ENCODE measurements at regions of chr1 and their contacts with region 1.

Region 1: GRCh38 chr1:247906504-247907047 is 11.2 kb downstream of the OR2W3 start:
- DNase-seq: peak in 5 of 9 donors; percentile 4 to 15 (median 7)
- ATAC-seq: peak; percentile 54
- H3K4me3 ChIP-seq: peak overlapping the region; percentile 36
- H3K4me3 Mint-ChIP-seq: peak overlapping the region; percentile 81 to 90 (median 85)
- H3K27ac ChIP-seq: peak overlapping the region; percentile 7
- H3K27ac Mint-ChIP-seq: peak overlapping the region; percentile 74 to 92 (median 80)
- H3K4me1 ChIP-seq: no peaks in the 10 kb centered on the region
- H3K4me1 Mint-ChIP-seq: peaks cover 15 to 28% (median 19%) of the 10 kb centered on the region in 7 donors
- H3K27me3 ChIP-seq: no peaks in the 10 kb centered on the region
- H3K27me3 Mint-ChIP-seq: no peaks in the 10 kb centered on the region

Region 2: GRCh38 chr1:247421074-247421473 is 485.5 kb before region 1 on chr1:
- CTCF ChIA-PET with region 1: no interaction called
- POLR2A ChIA-PET with region 1: no interaction called
- intact Hi-C with region 1: no loop called
- DNase-seq: no peak
- ATAC-seq: peak; percentile 60
- H3K4me3 ChIP-seq: no peak overlapping the region
- H3K4me3 Mint-ChIP-seq: peak overlapping the region in 8 of 10 donors; percentile 34 to 52 (median 42)
- H3K27ac ChIP-seq: no peak overlapping the region
- H3K27ac Mint-ChIP-seq: peak overlapping the region in 5 of 9 donors; percentile 11 to 63 (median 25)
- H3K4me1 ChIP-seq: peaks cover 9 to 22% of the 10 kb centered on the region in 2 donors
- H3K4me1 Mint-ChIP-seq: peaks cover 15 to 76% (median 51%) of the 10 kb centered on the region in 7 donors
- H3K27me3 ChIP-seq: no peaks in the 10 kb centered on the region
- H3K27me3 Mint-ChIP-seq: peaks cover 0 to 14% (median 0%) of the 10 kb centered on the region in 5 donors

Region 3: DNA sequence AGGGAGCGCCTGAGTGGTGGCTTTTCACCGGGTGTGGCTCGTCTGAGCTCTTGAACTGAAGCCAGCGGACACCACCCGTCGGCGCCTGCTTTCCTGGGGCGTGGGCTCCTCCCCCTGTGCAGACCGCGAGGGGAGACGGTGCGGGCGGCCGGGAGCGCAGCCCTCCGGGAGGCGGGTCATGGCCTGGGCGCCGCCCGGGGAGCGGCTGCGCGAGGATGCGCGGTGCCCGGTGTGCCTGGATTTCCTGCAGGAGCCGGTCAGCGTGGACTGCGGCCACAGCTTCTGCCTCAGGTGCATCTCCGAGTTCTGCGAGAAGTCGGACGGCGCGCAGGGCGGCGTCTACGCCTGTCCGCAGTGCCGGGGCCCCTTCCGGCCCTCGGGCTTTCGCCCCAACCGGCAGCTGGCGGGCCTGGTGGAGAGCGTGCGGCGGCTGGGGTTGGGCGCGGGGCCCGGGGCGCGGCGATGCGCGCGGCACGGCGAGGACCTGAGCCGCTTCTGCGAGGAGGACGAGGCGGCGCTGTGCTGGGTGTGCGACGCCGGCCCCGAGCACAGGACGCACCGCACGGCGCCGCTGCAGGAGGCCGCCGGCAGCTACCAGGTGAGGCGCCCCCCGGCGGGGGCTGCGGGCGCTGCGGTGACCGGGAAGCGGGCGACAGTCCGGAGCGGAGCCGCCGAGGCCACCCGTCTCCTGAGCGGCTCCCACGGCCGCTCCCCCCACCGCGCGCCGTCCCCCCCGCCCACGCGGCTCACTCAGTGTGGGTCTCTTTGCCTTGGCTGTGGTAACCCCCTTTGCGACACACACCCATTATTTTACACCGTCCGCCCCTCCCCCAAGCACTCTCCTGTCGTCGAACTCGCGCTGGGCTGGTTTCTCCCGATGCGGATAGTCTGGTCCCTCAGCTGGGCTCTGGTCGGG is 49.2 kb before region 1 on chr1 and contains the start of gene TRIM58:
- CTCF ChIA-PET with region 1: no interaction called
- POLR2A ChIA-PET with region 1: no interaction called
- intact Hi-C with region 1: loop called in 1 of 2 experiments (anchors 5 kb)
- DNase-seq: peak in 6 of 9 donors; percentile 4 to 53 (median 10)
- ATAC-seq: peak; percentile 71
- H3K4me3 ChIP-seq: peak within 1 kb of the TSS; percentile 13
- H3K4me3 Mint-ChIP-seq: peak within 1 kb of the TSS; percentile 71 to 87 (median 80)
- H3K27ac ChIP-seq: no peak within 1 kb of the TSS
- H3K27ac Mint-ChIP-seq: peak within 1 kb of the TSS in 4 of 9 donors; percentile 25 to 46 (median 36)
- H3K4me1 ChIP-seq: no peaks in the 10 kb centered on the region
- H3K4me1 Mint-ChIP-seq: peaks cover 6 to 17% (median 11%) of the 10 kb centered on the region in 7 donors
- H3K27me3 ChIP-seq: peaks cover 0 to 6% of the 10 kb centered on the region in 2 donors
- H3K27me3 Mint-ChIP-seq: peaks cover 43 to 70% (median 59%) of the 10 kb centered on the region in 5 donors
- total RNA-seq, gene TRIM58: 0.24 to 2.1 (median 0.65) TPM in 4 of 5 experiments, not detected in the other

Region 4: GRCh38 chr1:247924868-247925267 is 18.3 kb after region 1 on chr1 and contains the start of gene OR2AJ1:
- CTCF ChIA-PET with region 1: no interaction called
- POLR2A ChIA-PET with region 1: no interaction called
- intact Hi-C with region 1: no loop called
- DNase-seq: no peak
- ATAC-seq: no peak
- H3K4me3 ChIP-seq: no peak within 1 kb of the TSS
- H3K4me3 Mint-ChIP-seq: no peak within 1 kb of the TSS
- H3K27ac ChIP-seq: no peak within 1 kb of the TSS
- H3K27ac Mint-ChIP-seq: no peak within 1 kb of the TSS
- H3K4me1 ChIP-seq: no peaks in the 10 kb centered on the region
- H3K4me1 Mint-ChIP-seq: no peaks in the 10 kb centered on the region
- H3K27me3 ChIP-seq: no peaks in the 10 kb centered on the region
- H3K27me3 Mint-ChIP-seq: peaks cover 0 to 13% (median 3%) of the 10 kb centered on the region in 5 donors
- total RNA-seq, gene OR2AJ1: not detected

Region 5: GRCh38 chr1:247936415-247936814 is 29.8 kb after region 1 on chr1:
- CTCF ChIA-PET with region 1: no interaction called
- POLR2A ChIA-PET with region 1: no interaction called
- intact Hi-C with region 1: loop called in 1 of 2 experiments (anchors 2 kb)
- DNase-seq: no peak
- ATAC-seq: no peak
- H3K4me3 ChIP-seq: no peak overlapping the region
- H3K4me3 Mint-ChIP-seq: peak overlapping the region in 3 of 10 donors; percentile 5 to 88 (median 43)
- H3K27ac ChIP-seq: no peak overlapping the region
- H3K27ac Mint-ChIP-seq: peak overlapping the region in 1 of 9 donors; percentile 41
- H3K4me1 ChIP-seq: no peaks in the 10 kb centered on the region
- H3K4me1 Mint-ChIP-seq: peaks cover 0 to 15% (median 0%) of the 10 kb centered on the region in 7 donors
- H3K27me3 ChIP-seq: no peaks in the 10 kb centered on the region
- H3K27me3 Mint-ChIP-seq: peaks cover 0 to 6% (median 2%) of the 10 kb centered on the region in 5 donors

Region 6: DNA sequence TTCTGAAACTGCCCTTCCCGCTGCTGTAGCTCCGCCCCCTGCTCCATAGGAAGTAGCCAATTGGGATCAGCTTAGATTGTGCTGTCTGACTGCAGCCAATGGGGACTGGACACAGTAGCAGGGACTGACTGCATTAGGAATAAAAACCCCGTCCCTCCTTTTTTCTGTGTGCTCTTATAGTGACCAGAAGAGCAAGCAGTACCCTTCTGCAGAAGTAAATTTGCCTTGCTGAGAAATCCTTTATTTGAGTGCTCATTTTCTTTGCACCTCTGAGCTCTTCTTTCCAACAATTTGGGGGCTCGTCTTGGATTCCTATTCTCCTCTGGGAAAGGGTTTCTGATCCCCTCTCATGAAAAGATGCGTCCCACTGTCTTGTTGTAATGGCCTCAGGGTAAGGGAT is 204.6 kb after region 1 on chr1:
- CTCF ChIA-PET with region 1: no interaction called
- POLR2A ChIA-PET with region 1: no interaction called
- intact Hi-C with region 1: no loop called
- DNase-seq: no peak
- ATAC-seq: no peak
- H3K4me3 ChIP-seq: no peak overlapping the region
- H3K4me3 Mint-ChIP-seq: no peak overlapping the region
- H3K27ac ChIP-seq: no peak overlapping the region
- H3K27ac Mint-ChIP-seq: no peak overlapping the region
- H3K4me1 ChIP-seq: no peaks in the 10 kb centered on the region
- H3K4me1 Mint-ChIP-seq: no peaks in the 10 kb centered on the region
- H3K27me3 ChIP-seq: no peaks in the 10 kb centered on the region
- H3K27me3 Mint-ChIP-seq: peaks cover 0 to 14% (median 0%) of the 10 kb centered on the region in 5 donors

Region 7: DNA sequence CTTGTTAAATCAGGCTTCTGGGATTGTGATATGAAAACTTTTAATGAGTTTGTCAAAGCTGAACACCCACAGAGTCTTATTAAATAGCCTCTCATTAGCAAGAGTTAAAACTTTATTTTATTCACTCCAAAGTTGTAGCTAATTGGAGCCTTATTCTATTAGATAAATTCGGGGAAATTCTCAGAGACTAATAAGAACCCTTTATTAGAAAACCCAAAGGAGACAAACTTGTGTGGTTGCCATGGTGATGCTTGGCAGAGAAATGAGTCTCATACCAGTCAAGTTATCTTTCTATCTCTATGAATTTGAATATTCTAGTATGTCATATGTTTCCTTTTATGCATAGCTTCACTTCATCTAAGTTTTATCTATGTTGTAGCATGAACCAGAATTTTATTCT is 345.0 kb after region 1 on chr1:
- CTCF ChIA-PET with region 1: no interaction called
- POLR2A ChIA-PET with region 1: no interaction called
- intact Hi-C with region 1: no loop called
- DNase-seq: no peak
- ATAC-seq: no peak
- H3K4me3 ChIP-seq: no peak overlapping the region
- H3K4me3 Mint-ChIP-seq: no peak overlapping the region
- H3K27ac ChIP-seq: no peak overlapping the region
- H3K27ac Mint-ChIP-seq: no peak overlapping the region
- H3K4me1 ChIP-seq: no peaks in the 10 kb centered on the region
- H3K4me1 Mint-ChIP-seq: peaks cover 0 to 3% (median 0%) of the 10 kb centered on the region in 7 donors
- H3K27me3 ChIP-seq: no peaks in the 10 kb centered on the region
- H3K27me3 Mint-ChIP-seq: peaks cover 0 to 17% (median 12%) of the 10 kb centered on the region in 5 donors